MCF 10A (cell line): ENCODE measurements at regions of chr17 and their contacts with region 1.

Region 1: DNA sequence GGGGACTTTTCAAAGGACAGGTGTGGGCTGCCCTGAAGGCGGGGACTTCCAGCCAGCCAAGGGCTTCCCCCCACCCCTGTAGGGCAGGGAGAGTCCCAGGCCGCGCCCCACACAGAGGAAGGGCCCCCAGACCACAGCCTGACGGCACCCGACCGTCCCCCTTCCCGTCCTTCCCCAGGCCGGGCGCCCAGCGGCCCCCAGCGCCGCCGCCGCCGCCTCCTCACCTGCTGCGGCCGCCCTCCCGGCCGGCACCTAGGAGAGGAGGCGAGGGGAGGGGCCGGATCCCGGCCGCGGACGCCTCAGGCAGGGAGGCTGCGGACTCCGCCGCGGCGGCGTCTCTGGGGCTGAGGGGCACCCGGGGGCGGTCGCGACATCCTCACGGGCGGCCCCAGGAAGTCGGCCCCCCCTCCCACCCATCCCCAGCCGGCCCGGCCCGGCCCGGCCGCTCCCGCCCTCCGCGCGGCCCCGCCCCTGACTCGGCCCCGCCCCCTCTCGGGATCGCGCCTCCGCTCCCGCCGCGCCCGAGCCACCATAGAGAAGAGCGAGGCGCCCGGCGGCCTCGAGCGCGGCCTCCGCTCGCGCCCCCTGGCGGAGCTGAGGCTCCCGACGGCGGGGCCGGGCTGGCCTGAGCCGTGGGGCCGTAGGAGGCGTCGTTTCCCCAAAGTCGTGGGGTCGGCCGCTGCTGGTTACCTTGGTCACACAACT is 25.5 kb upstream of the RFFL start:
- DNase-seq: peak; percentile 83
- H3K4me3 Mint-ChIP-seq: peak overlapping the region; percentile 80
- H3K27ac Mint-ChIP-seq: peak overlapping the region; percentile 84
- H3K4me1 Mint-ChIP-seq: peaks cover 11% of the 10 kb centered on the region
- H3K27me3 Mint-ChIP-seq: no peaks in the 10 kb centered on the region
- CTCF ChIP-seq: peak; percentile 72

Region 2: DNA sequence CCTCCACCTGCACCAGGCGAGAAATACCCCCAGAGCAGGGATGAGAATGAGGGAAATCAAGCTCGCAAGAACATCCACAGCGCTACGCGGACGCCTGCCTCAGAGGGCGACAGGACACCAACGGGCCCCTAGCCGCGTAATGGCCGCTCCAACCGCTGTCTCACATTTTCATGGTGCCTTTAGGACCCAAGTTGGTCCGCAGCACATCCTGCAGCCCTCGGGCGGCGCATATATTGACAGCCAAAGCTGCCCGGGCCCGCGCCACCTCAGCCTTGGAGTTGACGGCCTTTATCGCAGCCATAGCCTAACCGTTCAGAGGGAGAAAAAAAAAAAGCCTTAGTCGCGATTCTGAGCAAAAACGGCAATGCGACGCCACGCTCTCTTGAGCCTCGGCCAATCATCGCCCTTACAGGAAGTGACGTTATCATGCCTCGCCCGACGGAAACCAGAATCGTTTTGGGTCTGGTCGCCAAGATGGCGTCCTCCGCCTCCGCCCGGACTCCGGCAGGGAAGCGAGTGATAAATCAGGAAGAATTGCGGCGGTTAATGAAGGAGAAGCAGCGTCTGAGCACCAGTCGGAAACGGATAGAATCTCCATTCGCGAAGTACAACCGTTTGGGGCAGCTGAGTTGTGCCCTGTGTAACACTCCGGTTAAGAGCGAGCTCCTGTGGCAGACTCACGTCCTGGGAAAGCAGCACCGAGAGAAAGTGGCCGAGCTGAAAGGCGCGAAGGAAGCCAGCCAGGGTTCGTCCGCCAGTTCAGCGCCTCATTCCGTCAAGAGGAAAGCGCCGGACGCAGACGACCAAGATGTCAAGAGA is 127.7 kb before region 1 on chr17 and contains the starts of genes CCT6B and ZNF830:
- CTCF ChIA-PET with region 1: interaction called, 5 read pairs
- POLR2A ChIA-PET with region 1: interaction called, 16 read pairs
- intact Hi-C with region 1: no loop called
- DNase-seq: peak; percentile 95
- H3K4me3 Mint-ChIP-seq: peak within 1 kb of the TSS; percentile 93
- H3K27ac Mint-ChIP-seq: peak within 1 kb of the TSS; percentile 100
- H3K4me1 Mint-ChIP-seq: peaks cover 16% of the 10 kb centered on the region
- H3K27me3 Mint-ChIP-seq: no peaks in the 10 kb centered on the region
- CTCF ChIP-seq: no peak
- total RNA-seq, gene CCT6B: 4.6 and 5.7 TPM in 2 replicates
- total RNA-seq, gene ZNF830: 21.6 and 26.3 TPM in 2 replicates

Region 3: DNA sequence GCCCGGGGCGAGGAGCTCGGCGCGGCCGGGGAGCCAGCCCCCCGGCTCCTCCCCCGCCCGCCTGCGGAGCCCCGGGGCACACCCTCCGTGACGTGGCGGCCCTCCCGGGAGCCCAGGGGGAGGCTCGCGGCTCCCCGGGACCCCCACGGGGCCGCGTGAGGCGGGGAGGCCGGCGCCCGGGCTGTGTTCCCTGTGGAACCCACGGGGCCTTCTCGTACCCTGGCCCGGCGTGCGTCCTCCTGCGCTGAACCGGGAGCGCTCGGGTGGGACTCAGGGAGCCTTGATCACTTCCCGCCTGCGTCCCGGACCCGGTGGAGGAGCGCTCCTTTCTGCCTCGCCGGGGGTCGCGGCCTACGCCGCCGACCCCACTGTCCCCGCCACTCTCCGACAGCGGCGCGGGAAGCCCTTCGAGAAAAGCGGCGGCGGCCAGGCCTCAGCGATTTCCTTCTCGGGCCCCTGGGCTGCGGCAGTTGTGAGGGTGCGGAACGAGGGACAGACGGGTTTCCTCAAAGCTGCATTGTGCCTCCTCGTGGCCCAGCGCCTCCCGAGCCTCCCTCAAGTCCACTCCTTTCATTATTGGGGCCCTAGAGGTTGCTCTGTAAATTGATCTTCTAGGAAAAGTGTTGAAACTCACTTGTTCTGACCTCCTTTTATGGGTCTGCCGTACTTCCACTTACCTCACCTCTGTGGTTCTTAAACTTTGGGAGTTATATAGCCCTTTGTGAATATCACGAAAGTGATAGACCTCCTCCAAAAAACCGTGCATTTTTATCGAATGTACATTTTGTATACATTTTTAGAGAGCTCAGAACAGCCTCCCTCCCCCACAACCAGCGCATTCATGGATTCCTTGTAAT is 108.1 kb before region 1 on chr17:
- CTCF ChIA-PET with region 1: interaction called, 5 read pairs
- POLR2A ChIA-PET with region 1: interaction called, 28 read pairs
- intact Hi-C with region 1: loop called (anchors 5 kb)
- DNase-seq: peak; percentile 83
- H3K4me3 Mint-ChIP-seq: peak overlapping the region; percentile 75
- H3K27ac Mint-ChIP-seq: peak overlapping the region; percentile 89
- H3K4me1 Mint-ChIP-seq: peaks cover 27% of the 10 kb centered on the region
- H3K27me3 Mint-ChIP-seq: no peaks in the 10 kb centered on the region
- CTCF ChIP-seq: peak; percentile 39

Region 4: GRCh38 chr17:34998205-34998604 is 90.8 kb before region 1 on chr17:
- CTCF ChIA-PET with region 1: interaction called, 30 read pairs
- POLR2A ChIA-PET with region 1: interaction called, 3 read pairs
- intact Hi-C with region 1: loop called (anchors 1 kb)
- DNase-seq: peak; percentile 64
- H3K4me3 Mint-ChIP-seq: no peak overlapping the region
- H3K27ac Mint-ChIP-seq: no peak overlapping the region
- H3K4me1 Mint-ChIP-seq: no peaks in the 10 kb centered on the region
- H3K27me3 Mint-ChIP-seq: no peaks in the 10 kb centered on the region
- CTCF ChIP-seq: peak; percentile 85

Region 5: GRCh38 chr17:35022536-35023063 is 66.4 kb before region 1 on chr17:
- CTCF ChIA-PET with region 1: interaction called, 12 read pairs
- POLR2A ChIA-PET with region 1: interaction called, 6 read pairs
- intact Hi-C with region 1: loop called (anchors 5 kb)
- DNase-seq: peak; percentile 79
- H3K4me3 Mint-ChIP-seq: no peak overlapping the region
- H3K27ac Mint-ChIP-seq: peak overlapping the region; percentile 39
- H3K4me1 Mint-ChIP-seq: peaks cover 19% of the 10 kb centered on the region
- H3K27me3 Mint-ChIP-seq: no peaks in the 10 kb centered on the region
- CTCF ChIP-seq: no peak

Region 6: DNA sequence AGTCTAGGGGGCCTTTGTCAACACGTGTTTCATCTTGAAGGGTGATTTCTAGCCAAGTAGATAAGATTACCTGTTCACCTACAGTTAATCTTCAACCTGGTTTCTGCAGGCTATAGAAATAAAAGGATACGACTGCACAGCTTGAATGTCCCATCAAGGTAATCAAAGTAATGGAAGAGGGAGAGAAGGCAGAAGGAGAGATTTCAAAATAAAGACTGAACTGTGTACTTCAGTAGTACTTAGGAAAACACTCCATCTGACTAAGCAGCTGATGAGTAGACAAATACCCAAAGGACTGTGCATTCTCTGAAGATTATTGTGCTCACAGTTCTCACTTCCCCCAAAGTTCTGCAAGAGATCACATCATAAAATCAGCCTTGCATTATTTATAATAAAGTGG is 19.7 kb before region 1 on chr17:
- CTCF ChIA-PET with region 1: interaction called, 11 read pairs
- POLR2A ChIA-PET with region 1: interaction called, 119 read pairs
- intact Hi-C with region 1: no loop called
- DNase-seq: no peak
- H3K4me3 Mint-ChIP-seq: no peak overlapping the region
- H3K27ac Mint-ChIP-seq: no peak overlapping the region
- H3K4me1 Mint-ChIP-seq: peaks cover 12% of the 10 kb centered on the region
- H3K27me3 Mint-ChIP-seq: no peaks in the 10 kb centered on the region
- CTCF ChIP-seq: no peak

Region 7: GRCh38 chr17:35103271-35103670 is 14.2 kb after region 1 on chr17:
- CTCF ChIA-PET with region 1: interaction called, 15 read pairs
- POLR2A ChIA-PET with region 1: no interaction called
- intact Hi-C with region 1: no loop called
- DNase-seq: no peak
- H3K4me3 Mint-ChIP-seq: no peak overlapping the region
- H3K27ac Mint-ChIP-seq: peak overlapping the region; percentile 7
- H3K4me1 Mint-ChIP-seq: peaks cover 4% of the 10 kb centered on the region
- H3K27me3 Mint-ChIP-seq: no peaks in the 10 kb centered on the region
- CTCF ChIP-seq: no peak

Region 8: DNA sequence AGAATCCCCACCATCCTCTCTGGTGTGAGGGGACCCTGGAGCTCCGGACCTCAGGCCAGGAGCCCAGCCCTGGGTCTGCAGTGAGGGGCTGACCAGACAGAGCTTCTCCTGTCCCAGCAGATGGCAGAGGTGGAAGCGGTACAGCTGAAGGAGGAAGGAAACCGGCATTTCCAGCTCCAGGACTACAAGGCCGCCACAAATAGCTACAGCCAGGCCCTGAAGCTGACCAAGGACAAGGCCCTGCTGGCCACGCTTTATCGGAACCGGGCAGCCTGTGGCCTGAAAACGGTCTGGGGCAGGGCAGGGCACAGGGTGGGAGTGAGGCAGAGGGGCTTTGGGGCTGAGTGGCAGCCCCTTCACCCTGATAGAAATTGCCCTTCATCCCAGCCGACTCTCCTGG is 59.1 kb after region 1 on chr17:
- CTCF ChIA-PET with region 1: no interaction called
- POLR2A ChIA-PET with region 1: no interaction called
- intact Hi-C with region 1: no loop called
- DNase-seq: no peak
- H3K4me3 Mint-ChIP-seq: no peak overlapping the region
- H3K27ac Mint-ChIP-seq: no peak overlapping the region
- H3K4me1 Mint-ChIP-seq: peaks cover 4% of the 10 kb centered on the region
- H3K27me3 Mint-ChIP-seq: no peaks in the 10 kb centered on the region
- CTCF ChIP-seq: no peak